ENCODE measurements at regions of chr10 and their contacts with region 1.

Region 1: GRCh38 chr10:69333205-69333604 is 54.9 kb downstream of the HK1 start:
- DNase-seq: peak; percentile 37 to 90
- H3K4me3 ChIP-seq: peak overlapping the region in 1 of 2 donors; percentile 31
- H3K27ac ChIP-seq: peak overlapping the region; percentile 90 to 91
- H3K4me1 ChIP-seq: peaks cover 53 to 91% of the 10 kb centered on the region in 2 donors
- H3K27me3 ChIP-seq: no peaks in the 10 kb centered on the region
- CTCF ChIP-seq: peak; percentile 49 to 60 (median 60)

Region 2: GRCh38 chr10:69237528-69238159 is 95.6 kb before region 1 on chr10:
- intact Hi-C with region 1: loop called (anchors 5 kb)
- DNase-seq: peak; percentile 40 to 90
- H3K4me3 ChIP-seq: no peak overlapping the region
- H3K27ac ChIP-seq: no peak overlapping the region
- H3K4me1 ChIP-seq: peaks cover 3 to 13% of the 10 kb centered on the region in 2 donors
- H3K27me3 ChIP-seq: no peaks in the 10 kb centered on the region
- CTCF ChIP-seq: peak; percentile 89 to 95 (median 91)

Region 3: DNA sequence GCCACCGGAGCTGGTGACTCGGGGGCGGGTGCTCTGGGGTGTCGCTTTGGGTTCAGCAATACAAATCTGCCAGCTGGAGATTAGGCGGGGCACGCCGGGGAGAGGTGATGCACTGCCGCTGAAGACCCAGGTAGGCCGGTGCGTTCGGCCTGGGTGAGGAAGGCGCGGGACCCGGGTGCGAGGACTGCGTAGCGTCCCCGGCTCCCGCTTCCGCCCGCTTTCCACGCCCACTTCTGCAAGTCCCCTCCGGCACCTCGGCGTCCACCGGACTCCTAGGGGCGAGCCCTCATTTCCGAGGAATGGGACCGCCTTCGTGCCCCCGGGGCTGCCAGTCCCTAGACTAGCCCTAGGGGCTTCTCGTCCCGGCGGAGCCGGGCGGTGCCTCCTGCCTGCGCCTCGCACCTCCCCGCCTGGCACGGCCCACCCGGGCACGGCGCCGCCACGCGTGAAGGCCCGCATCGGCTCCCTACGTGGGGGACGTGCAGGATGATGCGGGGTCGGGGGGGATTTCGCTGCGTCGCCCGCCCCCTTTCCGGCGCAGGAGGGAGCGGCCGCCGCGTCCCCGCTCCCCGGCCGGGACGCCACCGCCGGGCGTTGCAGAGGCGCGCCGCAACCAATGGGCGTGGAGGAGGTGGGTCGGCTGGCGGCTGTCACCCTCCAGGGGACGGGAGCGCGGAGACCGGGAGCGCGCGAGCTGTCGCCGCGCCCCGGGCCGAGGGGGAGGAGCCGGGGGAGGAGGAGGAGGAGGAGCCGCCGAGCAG is 14.9 kb before region 1 on chr10:
- intact Hi-C with region 1: loop called (anchors 2 kb)
- DNase-seq: peak; percentile 62 to 94
- H3K4me3 ChIP-seq: peak overlapping the region; percentile 90 to 92
- H3K27ac ChIP-seq: peak overlapping the region; percentile 91 to 99
- H3K4me1 ChIP-seq: peaks cover 11 to 28% of the 10 kb centered on the region in 2 donors
- H3K27me3 ChIP-seq: no peaks in the 10 kb centered on the region
- CTCF ChIP-seq: no peak

Region 4: GRCh38 chr10:69348816-69349541 is 15.8 kb after region 1 on chr10:
- intact Hi-C with region 1: loop called (anchors 2 kb)
- DNase-seq: peak in 1 of 2 donors; percentile 91
- H3K4me3 ChIP-seq: no peak overlapping the region
- H3K27ac ChIP-seq: peak overlapping the region; percentile 56 to 75
- H3K4me1 ChIP-seq: peaks cover 0 to 44% of the 10 kb centered on the region in 2 donors
- H3K27me3 ChIP-seq: no peaks in the 10 kb centered on the region
- CTCF ChIP-seq: no peak

Region 5: GRCh38 chr10:69360485-69361324 is 27.5 kb after region 1 on chr10:
- intact Hi-C with region 1: loop called (anchors 2 kb)
- DNase-seq: peak; percentile 71 to 93
- H3K4me3 ChIP-seq: peak overlapping the region; percentile 6 to 41
- H3K27ac ChIP-seq: peak overlapping the region; percentile 95 to 96
- H3K4me1 ChIP-seq: peaks cover 25 to 58% of the 10 kb centered on the region in 2 donors
- H3K27me3 ChIP-seq: no peaks in the 10 kb centered on the region
- CTCF ChIP-seq: no peak

Region 6: GRCh38 chr10:69375307-69376151 is 42.3 kb after region 1 on chr10:
- intact Hi-C with region 1: loop called (anchors 5 kb)
- DNase-seq: peak in 1 of 2 donors; percentile 74
- H3K4me3 ChIP-seq: peak overlapping the region in 1 of 2 donors; percentile 42
- H3K27ac ChIP-seq: peak overlapping the region; percentile 71 to 75
- H3K4me1 ChIP-seq: peaks cover 11 to 25% of the 10 kb centered on the region in 2 donors
- H3K27me3 ChIP-seq: no peaks in the 10 kb centered on the region
- CTCF ChIP-seq: no peak

Region 7: DNA sequence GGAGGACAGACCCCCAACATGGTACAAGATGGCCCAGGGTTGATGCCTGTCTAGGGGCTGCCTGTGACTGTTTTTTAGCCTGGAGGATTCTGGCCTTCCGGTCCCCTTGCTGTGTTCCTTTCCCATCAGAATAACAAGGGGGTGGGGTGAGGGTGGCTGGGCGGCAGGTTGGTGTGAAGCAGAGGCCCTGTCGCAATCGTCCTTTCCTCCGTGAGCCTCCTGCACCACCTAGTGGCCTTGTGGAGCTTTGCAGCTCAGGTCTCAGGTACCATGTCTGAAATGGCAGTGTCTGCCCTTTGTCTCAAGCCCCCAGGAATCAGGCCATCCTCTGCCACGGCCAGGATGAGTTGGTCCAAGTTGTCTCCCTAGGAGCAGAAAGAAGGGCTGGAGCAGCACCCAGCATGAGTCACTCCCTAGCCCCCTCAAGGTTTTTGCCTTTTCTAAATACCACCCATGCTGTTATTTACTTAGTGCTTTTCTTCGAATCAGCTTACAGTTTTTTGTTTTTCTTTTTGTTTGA is 59.3 kb after region 1 on chr10:
- intact Hi-C with region 1: loop called (anchors 5 kb)
- DNase-seq: peak; percentile 64 to 93
- H3K4me3 ChIP-seq: no peak overlapping the region
- H3K27ac ChIP-seq: peak overlapping the region; percentile 30 to 52
- H3K4me1 ChIP-seq: peaks cover 0 to 18% of the 10 kb centered on the region in 2 donors
- H3K27me3 ChIP-seq: no peaks in the 10 kb centered on the region
- CTCF ChIP-seq: peak; percentile 93 to 97 (median 96)

Measured in ascending aorta (tissue), 2 donors.